ENCODE measurements at regions of chr16 and their contacts with region 1.

Region 1: GRCh38 chr16:82263521-82264143 is 93.6 kb upstream of the MPHOSPH6 start:
- DNase-seq: peak; percentile 68 to 87
- H3K4me3 ChIP-seq: no peak overlapping the region
- H3K27ac ChIP-seq: no peak overlapping the region
- H3K4me1 ChIP-seq: peaks cover 5 to 9% (median 7%) of the 10 kb centered on the region in 4 donors
- H3K27me3 ChIP-seq: no peaks in the 10 kb centered on the region
- CTCF ChIP-seq: peak in 5 of 7 experiments; percentile 78 to 95 (median 84)
- EP300 ChIP-seq: no peak
- POLR2A ChIP-seq: no peak

Region 2: GRCh38 chr16:82344157-82344556 is 80.5 kb after region 1 on chr16:
- intact Hi-C with region 1: loop called (anchors 5 kb)
- DNase-seq: peak; percentile 55 to 59
- H3K4me3 ChIP-seq: no peak overlapping the region
- H3K27ac ChIP-seq: no peak overlapping the region
- H3K4me1 ChIP-seq: no peaks in the 10 kb centered on the region
- H3K27me3 ChIP-seq: no peaks in the 10 kb centered on the region
- CTCF ChIP-seq: peak in 5 of 7 experiments; percentile 49 to 84 (median 72)
- EP300 ChIP-seq: no peak
- POLR2A ChIP-seq: no peak

Region 3: GRCh38 chr16:83441517-83441916 is 1177.9 kb after region 1 on chr16:
- intact Hi-C with region 1: loop called (anchors 10 kb)
- DNase-seq: no peak
- H3K4me3 ChIP-seq: no peak overlapping the region
- H3K27ac ChIP-seq: no peak overlapping the region
- H3K4me1 ChIP-seq: no peaks in the 10 kb centered on the region
- H3K27me3 ChIP-seq: no peaks in the 10 kb centered on the region
- CTCF ChIP-seq: no peak
- EP300 ChIP-seq: no peak
- POLR2A ChIP-seq: no peak